ENCODE measurements at regions of chr7 and their contacts with region 1.

Region 1: GRCh38 chr7:12458520-12459131 is 55.0 kb upstream of the VWDE start:
- DNase-seq: no peak
- H3K4me3 ChIP-seq: no peak overlapping the region
- H3K27ac ChIP-seq: no peak overlapping the region
- H3K27me3 ChIP-seq: no peaks in the 10 kb centered on the region
- CTCF ChIP-seq: peak; percentile 81

Region 2: GRCh38 chr7:12389089-12389700 is 69.4 kb before region 1 on chr7:
- CTCF ChIA-PET with region 1: interaction called, 12 read pairs
- POLR2A ChIA-PET with region 1: no interaction called
- DNase-seq: peak; percentile 36
- H3K4me3 ChIP-seq: no peak overlapping the region
- H3K27ac ChIP-seq: no peak overlapping the region
- H3K27me3 ChIP-seq: no peaks in the 10 kb centered on the region
- CTCF ChIP-seq: peak; percentile 93

Region 3: DNA sequence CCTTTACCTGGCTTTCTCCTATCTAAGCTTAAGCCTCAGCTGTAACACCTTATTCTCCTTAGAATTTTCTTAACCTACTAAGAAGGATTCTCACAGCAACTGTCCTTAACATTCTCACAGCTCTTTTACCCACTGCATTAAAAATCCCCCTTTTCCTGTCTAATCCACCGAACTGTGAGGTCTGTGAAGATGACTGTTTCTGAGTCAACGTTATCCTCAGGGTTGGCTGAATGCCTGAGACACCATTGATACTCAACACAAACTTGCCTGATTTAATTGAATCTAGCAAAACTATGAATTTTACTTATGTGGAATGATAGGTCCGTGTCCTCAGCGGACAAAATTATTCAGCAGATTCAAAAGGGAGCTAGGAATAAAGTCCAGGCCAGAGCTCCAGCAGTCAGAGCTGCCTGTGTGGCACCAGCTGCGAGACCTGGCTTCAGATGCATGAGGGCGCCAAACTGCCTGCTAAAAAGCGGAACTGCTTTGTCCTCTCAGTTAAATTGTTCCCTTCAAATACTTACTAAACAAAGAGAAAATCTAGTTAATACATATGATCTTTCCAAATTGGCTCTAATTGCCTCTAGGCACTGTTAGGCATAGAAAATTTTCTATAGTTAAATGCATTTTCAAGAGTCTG is 21.6 kb before region 1 on chr7:
- CTCF ChIA-PET with region 1: interaction called, 24 read pairs
- POLR2A ChIA-PET with region 1: no interaction called
- DNase-seq: no peak
- H3K4me3 ChIP-seq: no peak overlapping the region
- H3K27ac ChIP-seq: no peak overlapping the region
- H3K27me3 ChIP-seq: no peaks in the 10 kb centered on the region
- CTCF ChIP-seq: peak; percentile 24

Region 4: GRCh38 chr7:12475362-12476063 is 16.9 kb after region 1 on chr7:
- CTCF ChIA-PET with region 1: interaction called, 103 read pairs
- POLR2A ChIA-PET with region 1: no interaction called
- DNase-seq: no peak
- H3K4me3 ChIP-seq: no peak overlapping the region
- H3K27ac ChIP-seq: no peak overlapping the region
- H3K27me3 ChIP-seq: no peaks in the 10 kb centered on the region
- CTCF ChIP-seq: no peak

Region 5: DNA sequence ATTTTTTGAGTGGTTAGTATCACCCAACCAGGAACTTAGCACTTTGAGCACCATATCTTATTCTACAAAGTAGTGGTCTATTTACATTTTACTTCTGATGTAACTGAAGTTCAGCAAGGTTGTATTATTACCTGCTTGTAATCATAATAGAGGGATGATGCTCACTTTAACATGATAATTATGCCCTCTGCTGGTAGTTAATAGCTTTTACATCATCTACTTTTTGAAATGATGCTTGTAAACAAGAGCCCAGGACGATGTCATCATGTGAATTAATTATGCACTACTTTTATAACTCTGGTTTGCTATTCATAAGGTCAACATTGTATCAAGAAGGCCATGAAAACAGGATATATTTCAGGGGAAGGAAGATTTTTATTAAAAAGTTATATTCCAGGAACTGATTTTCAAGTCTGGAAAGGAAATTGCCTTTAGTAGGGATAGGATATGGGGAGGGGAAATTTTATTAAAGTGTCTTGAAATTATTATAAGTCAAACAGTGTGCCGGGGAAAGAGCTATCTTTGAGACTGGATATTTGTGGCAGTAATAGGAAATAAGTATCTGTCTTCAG is 31.6 kb after region 1 on chr7:
- CTCF ChIA-PET with region 1: interaction called, 275 read pairs
- POLR2A ChIA-PET with region 1: no interaction called
- DNase-seq: peak; percentile 10
- H3K4me3 ChIP-seq: no peak overlapping the region
- H3K27ac ChIP-seq: no peak overlapping the region
- H3K27me3 ChIP-seq: no peaks in the 10 kb centered on the region
- CTCF ChIP-seq: peak; percentile 57

Region 6: GRCh38 chr7:12623897-12624498 is 165.4 kb after region 1 on chr7:
- CTCF ChIA-PET with region 1: interaction called, 12 read pairs
- POLR2A ChIA-PET with region 1: no interaction called
- DNase-seq: no peak
- H3K4me3 ChIP-seq: no peak overlapping the region
- H3K27ac ChIP-seq: no peak overlapping the region
- H3K27me3 ChIP-seq: no peaks in the 10 kb centered on the region
- CTCF ChIP-seq: peak; percentile 88

Region 7: DNA sequence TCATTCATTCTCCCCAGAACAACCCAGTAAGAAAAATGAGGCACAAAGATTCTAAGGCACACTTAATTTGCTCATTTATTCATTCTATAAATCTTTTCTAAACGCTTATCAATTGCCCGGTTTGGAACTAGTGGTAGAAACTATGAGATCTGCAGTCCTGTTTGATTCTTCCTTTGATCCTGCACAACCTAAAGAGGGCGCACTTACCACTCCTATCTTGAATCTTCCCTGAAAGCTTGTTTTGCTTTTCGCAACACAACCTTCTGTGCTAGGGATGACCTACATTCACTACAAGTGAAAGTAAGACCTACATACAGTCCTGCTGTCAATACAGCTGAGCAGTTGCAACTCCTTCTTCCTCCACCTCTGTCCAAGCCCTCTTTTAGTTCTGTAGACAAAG is 216.2 kb after region 1 on chr7:
- CTCF ChIA-PET with region 1: no interaction called
- POLR2A ChIA-PET with region 1: no interaction called
- DNase-seq: no peak
- H3K4me3 ChIP-seq: no peak overlapping the region
- H3K27ac ChIP-seq: no peak overlapping the region
- H3K27me3 ChIP-seq: no peaks in the 10 kb centered on the region
- CTCF ChIP-seq: peak; percentile 45